ENCODE measurements at regions of chr12 and their contacts with region 1.

Region 1: DNA sequence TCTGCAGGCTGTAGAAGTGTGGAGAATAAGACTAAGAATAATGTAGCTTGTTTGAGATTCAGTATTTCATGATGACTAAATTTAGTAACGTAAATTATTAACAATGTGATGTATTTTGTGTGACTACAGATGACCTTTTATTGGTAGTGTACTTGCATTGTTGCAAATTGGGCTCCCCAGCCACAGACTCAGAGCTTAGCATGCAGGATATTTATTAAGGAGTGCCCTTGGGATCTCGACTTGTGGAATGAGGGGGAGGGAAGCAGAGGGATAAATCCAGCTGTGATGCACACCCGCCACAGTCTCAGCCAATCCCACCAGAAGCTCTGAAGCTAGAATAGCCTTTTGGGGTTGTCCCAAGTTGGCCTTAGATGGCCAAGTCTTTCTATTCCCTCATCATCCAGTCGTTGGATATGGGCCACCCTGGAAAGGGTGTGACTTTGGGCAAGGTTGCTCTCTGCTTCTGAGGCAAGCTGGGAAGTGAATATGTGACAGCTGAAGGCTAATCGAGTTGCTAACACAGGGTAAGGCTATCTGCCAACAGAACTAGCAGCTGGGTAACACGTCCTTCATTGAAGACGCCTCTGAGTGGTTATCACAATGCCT is 42.1 kb upstream of the USP44 start:
- DNase-seq: no peak
- H3K4me3 ChIP-seq: no peak overlapping the region
- H3K27ac ChIP-seq: no peak overlapping the region
- H3K4me1 ChIP-seq: no peaks in the 10 kb centered on the region
- H3K27me3 ChIP-seq: no peaks in the 10 kb centered on the region
- CTCF ChIP-seq: no peak
- POLR2A ChIP-seq: no peak

Region 2: DNA sequence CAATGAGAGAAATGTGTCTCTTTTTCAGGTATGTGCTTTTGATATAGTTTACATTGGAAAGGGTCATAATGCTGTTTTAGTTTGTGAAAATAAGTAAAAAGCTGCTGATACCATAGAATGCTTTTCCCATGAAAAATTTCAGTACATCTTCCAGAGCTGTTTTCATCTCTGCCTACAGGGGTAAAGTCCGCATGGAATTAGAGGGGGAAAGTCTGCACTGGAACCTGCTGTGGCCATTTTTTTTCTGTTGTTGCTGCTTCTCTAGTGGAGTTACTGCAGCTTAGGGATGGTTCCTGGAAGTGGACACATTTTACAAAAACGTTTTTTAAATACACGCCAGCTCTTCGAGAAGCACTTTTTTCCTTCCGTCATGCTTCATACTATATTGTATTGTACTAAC is 294.5 kb before region 1 on chr12:
- CTCF ChIA-PET with region 1: no interaction called
- POLR2A ChIA-PET with region 1: no interaction called
- dilution Hi-C with region 1: no loop called
- intact Hi-C with region 1: no loop called
- DNase-seq: no peak
- H3K4me3 ChIP-seq: no peak overlapping the region
- H3K27ac ChIP-seq: no peak overlapping the region
- H3K4me1 ChIP-seq: peaks cover 29% of the 10 kb centered on the region
- H3K27me3 ChIP-seq: no peaks in the 10 kb centered on the region
- CTCF ChIP-seq: no peak
- POLR2A ChIP-seq: no peak

Region 3: DNA sequence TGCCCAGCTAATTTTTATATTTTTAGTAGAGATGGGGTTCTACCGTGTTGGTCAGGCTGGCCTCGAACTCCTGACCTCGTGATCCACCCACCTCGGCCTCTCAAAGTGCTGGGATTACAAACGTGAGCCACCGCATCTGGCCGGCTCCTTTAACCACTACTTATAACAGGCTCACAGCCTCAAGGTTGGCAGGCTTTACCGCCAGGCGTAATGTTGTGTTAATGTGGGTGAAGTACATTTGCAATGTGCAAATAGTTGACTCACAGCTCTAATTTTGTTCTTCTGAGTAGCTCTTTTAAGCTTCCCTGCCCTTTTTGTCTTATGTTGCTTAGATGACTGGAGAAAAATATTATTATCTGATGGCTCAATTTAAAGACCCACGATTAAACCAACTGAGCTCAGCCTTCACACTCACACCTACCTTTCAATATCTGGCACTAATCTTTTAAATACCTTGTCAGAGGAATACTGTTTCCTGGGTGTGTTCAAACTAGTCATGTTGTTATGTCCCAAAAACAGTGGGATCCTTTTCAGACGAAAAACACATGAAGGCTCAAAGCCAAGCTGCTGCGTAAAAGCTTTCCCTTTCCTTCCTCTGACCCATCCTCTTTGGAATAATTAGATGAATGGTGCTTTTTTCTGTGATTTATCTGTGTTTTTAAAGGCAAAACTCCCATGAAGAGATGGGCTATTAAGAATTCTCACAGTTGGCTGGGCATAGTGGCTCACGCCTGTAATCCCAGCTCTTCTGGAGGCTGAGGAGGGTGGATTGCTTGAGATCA is 15.1 kb after region 1 on chr12:
- CTCF ChIA-PET with region 1: interaction called, 17 read pairs
- POLR2A ChIA-PET with region 1: no interaction called
- dilution Hi-C with region 1: no loop called
- intact Hi-C with region 1: no loop called
- DNase-seq: peak; percentile 91
- H3K4me3 ChIP-seq: no peak overlapping the region
- H3K27ac ChIP-seq: peak overlapping the region; percentile 91
- H3K4me1 ChIP-seq: peaks cover 74% of the 10 kb centered on the region
- H3K27me3 ChIP-seq: no peaks in the 10 kb centered on the region
- CTCF ChIP-seq: no peak
- POLR2A ChIP-seq: no peak